Activated B cell treated with CpG ODN at 0.5 μM for 24 hours (primary cell): ENCODE measurements at regions of chr6 and their contacts with region 1.

Region 1: DNA sequence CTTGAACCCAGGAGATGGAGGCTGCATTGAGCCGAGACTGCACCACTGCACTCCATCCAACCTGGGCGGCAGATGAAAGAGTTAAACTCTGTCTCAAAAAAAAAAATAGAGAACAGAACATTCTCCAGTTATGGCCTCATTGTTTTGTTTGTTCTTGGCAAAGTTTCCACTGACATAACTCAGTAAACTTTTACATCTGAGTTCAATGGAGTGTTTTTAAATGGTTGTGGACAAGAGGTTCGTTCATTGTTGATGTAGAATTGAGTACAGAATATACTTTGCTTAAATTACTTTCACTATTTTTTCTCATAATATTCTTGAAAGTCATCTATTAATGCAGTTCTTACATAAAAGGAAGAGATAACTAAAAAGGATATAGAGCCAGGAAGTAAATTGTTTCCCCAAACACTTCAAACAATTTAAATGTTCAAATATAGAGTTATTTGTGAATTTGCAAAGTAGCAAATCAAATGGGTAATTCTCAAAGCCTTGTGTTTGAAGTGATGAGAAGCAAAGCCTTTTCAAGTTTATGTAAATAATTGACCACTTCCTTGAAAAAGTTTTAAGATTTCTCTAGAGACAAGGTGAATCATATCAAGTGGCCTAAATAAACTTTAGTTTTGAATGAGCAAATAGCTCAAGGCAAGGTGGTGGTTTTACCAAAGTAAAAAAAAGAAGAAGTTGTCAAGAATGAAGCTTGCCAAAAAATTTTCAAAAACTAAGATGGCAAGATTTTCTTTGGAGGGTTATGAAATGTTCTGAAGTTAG is 42.4 kb upstream of the IFNGR1 start:
- DNase-seq: no peak
- ATAC-seq: peak; percentile 91
- H3K4me3 Mint-ChIP-seq: peak overlapping the region; percentile 32
- H3K27ac Mint-ChIP-seq: peak overlapping the region; percentile 74
- H3K4me1 Mint-ChIP-seq: peaks cover 40% of the 10 kb centered on the region
- H3K27me3 Mint-ChIP-seq: no peaks in the 10 kb centered on the region
- CTCF ChIP-seq: no peak

Region 2: DNA sequence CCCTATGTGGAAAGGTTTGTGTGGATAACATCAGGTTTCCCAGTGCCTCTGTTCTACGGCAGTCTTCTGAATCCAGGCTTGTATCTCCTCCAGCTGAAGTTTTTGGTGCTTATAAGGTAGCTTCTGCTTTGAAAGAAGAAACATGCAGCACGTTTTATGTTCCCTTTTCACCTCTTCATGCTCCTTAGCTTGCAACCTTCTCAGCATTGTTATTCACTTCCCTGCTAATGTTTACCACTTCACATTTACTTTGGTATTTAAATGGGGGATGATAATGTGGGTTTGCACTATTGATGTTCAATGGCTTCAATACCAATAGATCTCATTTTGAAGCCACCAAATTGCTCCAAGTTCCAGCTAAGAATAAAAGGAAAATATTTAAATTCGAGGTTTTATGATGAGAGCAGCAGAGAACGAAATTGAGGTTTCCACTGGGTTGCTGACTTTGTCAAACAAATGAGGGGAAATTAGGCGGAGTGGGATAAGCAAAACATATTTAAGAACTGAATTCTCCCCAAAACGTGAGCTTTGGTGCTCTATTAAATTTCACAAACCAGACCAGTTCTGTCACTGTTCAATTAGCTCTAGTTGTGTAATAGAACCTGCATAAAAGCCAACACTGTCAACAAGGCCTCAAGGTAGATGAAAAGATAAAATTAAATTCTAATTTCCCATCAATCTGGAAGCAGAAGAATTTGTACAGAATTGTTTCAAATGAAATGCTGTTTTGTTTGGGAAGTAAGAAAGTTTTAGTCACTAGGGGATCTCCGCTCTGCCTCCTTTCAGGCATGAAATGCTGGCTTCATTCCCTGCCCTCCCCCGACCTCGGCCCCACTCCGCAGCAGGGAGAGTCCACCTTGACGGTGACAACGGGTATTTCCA is 89.5 kb before region 1 on chr6:
- CTCF ChIA-PET with region 1: interaction called, 4 read pairs
- POLR2A ChIA-PET with region 1: no interaction called
- intact Hi-C with region 1: loop called (anchors 5 kb)
- DNase-seq: no peak
- ATAC-seq: peak; percentile 68
- H3K4me3 Mint-ChIP-seq: peak overlapping the region; percentile 63
- H3K27ac Mint-ChIP-seq: peak overlapping the region; percentile 95
- H3K4me1 Mint-ChIP-seq: peaks cover 90% of the 10 kb centered on the region
- H3K27me3 Mint-ChIP-seq: no peaks in the 10 kb centered on the region
- CTCF ChIP-seq: no peak

Region 3: GRCh38 chr6:137224799-137225198 is 36.8 kb before region 1 on chr6:
- CTCF ChIA-PET with region 1: no interaction called
- POLR2A ChIA-PET with region 1: interaction called, 4 read pairs
- intact Hi-C with region 1: loop called (anchors 1 kb)
- DNase-seq: no peak
- ATAC-seq: peak; percentile 85
- H3K4me3 Mint-ChIP-seq: peak overlapping the region; percentile 35
- H3K27ac Mint-ChIP-seq: peak overlapping the region; percentile 85
- H3K4me1 Mint-ChIP-seq: peaks cover 71% of the 10 kb centered on the region
- H3K27me3 Mint-ChIP-seq: no peaks in the 10 kb centered on the region
- CTCF ChIP-seq: no peak

Region 4: GRCh38 chr6:137233911-137234863 is 27.4 kb before region 1 on chr6:
- CTCF ChIA-PET with region 1: no interaction called
- POLR2A ChIA-PET with region 1: interaction called, 6 read pairs
- intact Hi-C with region 1: loop called (anchors 1 kb)
- DNase-seq: no peak
- ATAC-seq: peak; percentile 76
- H3K4me3 Mint-ChIP-seq: peak overlapping the region; percentile 73
- H3K27ac Mint-ChIP-seq: peak overlapping the region; percentile 80
- H3K4me1 Mint-ChIP-seq: peaks cover 70% of the 10 kb centered on the region
- H3K27me3 Mint-ChIP-seq: no peaks in the 10 kb centered on the region
- CTCF ChIP-seq: no peak

Region 5: DNA sequence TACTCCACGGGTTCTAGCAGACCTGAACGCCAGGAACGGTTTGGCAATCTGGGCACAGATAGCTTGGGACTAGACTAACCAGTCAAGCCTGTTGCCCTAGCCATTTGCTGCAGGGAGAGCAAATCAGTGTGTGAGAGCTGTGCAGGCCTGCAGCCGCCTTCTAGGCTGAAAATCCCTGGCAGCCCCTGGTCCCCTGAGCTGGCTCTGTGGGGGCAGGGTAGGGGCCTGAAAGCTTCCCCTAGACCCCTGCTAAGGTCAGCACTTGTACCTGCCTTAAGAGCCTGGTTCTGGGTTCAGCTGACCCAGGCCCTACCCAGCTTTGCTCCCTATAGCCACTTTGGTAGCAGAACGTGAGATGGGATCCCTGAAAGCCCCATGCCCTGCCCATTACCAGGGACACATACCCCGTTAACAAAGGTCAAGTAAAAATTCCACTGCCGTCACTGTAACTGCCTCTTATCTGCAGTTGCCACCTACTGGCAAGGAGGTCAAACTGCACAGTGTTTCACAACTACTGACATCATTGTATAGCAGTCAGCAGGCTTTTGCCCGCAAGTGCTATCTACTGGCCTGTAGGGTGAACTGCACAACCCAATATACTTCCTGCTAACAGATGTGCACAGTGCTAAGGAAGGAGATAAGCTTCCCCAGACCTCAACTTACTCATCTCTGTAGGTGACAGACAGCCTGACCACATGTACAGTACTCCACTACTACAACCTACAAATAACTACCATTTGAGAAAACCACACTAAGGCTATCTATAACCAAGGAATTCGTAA is 327.7 kb after region 1 on chr6:
- CTCF ChIA-PET with region 1: no interaction called
- POLR2A ChIA-PET with region 1: no interaction called
- intact Hi-C with region 1: no loop called
- DNase-seq: no peak
- ATAC-seq: peak; percentile 90
- H3K4me3 Mint-ChIP-seq: no peak overlapping the region
- H3K27ac Mint-ChIP-seq: no peak overlapping the region
- H3K4me1 Mint-ChIP-seq: no peaks in the 10 kb centered on the region
- H3K27me3 Mint-ChIP-seq: peaks cover 30% of the 10 kb centered on the region
- CTCF ChIP-seq: no peak